A673 (cell line): ENCODE measurements at regions of chr19 and their contacts with region 1.

Region 1: DNA sequence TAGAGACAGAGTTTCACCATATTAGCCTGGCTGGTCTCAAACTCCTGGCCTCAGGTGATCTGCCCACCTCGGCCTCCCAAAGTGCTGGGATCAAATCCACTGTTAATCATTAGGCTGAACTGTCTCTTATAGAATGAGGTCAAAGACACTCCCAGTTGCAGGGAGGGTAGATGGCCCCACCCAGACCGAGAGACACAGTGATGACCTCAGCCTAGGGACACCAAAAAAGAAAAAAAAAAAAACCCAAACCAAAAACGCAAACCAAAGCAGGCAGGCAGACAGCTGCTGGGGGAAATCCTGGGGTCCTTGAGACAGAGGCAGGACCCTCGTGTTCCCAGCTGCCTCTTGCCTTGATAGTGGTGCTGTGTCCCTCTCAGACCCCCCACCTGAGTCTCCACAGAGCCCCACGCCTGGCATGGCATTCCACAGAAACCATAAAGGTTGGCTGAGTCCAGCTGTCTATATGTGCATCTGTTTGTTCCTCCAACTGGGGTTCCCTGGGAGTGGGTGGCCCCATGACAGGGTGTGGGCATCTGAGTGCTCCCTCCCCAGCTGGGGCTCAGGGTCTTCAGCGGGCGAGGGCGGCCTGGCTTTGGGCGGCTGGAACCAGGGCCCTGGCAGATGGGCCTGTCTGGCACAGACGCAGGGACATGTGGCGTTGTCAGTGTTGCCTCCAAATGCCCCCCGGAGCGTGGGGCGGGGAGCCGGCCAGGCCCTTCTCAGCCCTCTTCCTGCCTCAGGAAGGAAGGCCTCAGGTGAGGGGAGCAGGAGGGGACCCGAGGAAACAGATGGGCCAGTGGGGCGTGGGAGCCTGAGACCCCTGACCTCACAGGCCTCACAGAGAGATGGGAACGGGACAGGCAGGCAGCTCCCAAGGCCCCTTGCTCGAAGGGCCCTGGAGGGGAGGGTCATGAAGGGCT is 5.2 kb downstream of the DAND5 start:
- DNase-seq: no peak
- H3K4me3 ChIP-seq: no peak overlapping the region
- H3K27ac ChIP-seq: no peak overlapping the region
- H3K4me1 ChIP-seq: no peaks in the 10 kb centered on the region
- H3K27me3 ChIP-seq: no peaks in the 10 kb centered on the region
- CTCF ChIP-seq: no peak

Region 2: GRCh38 chr19:12913011-12913561 is 61.5 kb before region 1 on chr19:
- CTCF ChIA-PET with region 1: no interaction called
- POLR2A ChIA-PET with region 1: no interaction called
- intact Hi-C with region 1: no loop called
- DNase-seq: peak; percentile 90
- H3K4me3 ChIP-seq: peak overlapping the region; percentile 8
- H3K27ac ChIP-seq: peak overlapping the region; percentile 76
- H3K4me1 ChIP-seq: peaks cover 26% of the 10 kb centered on the region
- H3K27me3 ChIP-seq: no peaks in the 10 kb centered on the region
- CTCF ChIP-seq: no peak

Region 3: DNA sequence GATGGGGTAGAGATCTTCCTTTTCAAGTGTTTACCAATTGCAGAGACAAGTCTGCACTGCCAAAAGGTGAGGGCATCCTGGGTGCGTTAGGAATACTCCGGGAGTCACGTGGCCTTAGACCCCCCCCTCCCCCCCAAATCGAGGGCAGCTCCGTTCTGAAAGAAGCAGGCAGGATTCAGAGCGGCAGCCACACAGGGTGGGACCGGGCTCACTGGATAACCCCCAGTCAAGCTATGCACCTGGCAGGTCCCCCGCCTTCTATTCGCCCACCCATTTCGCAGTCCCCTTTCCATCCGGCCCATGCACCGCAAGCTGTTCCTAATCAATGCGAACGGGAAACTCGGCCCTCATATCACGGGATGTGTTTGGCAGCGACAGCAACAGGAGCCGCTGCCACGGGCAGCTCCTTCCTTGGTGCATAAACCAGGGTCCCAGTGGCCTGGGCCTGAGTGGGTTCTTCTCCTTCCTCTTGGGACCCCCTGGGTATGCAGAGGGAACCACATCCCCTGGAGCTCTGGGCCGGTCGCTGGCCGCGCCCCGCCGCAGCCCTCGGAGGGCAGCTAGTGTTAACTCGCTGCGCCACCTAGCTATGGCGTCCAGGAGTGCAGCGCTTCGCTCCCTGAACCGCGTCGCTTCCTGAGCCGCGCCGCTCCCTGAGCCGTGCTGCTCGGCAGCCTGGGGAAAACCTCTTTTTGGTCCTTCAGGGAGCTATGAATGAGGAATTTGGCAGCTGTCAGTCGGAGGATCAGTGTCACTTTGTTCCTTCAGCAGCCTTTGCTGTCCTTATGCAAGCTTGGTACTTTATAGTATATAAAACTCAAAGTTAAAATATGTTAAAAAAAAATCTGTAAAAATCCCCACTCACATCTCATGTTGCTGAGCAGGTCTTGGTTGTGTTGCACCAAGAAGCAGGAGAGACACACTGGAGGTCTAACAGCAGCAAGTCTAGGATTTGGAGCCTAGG is 86.7 kb after region 1 on chr19:
- CTCF ChIA-PET with region 1: interaction called, 20 read pairs
- POLR2A ChIA-PET with region 1: no interaction called
- intact Hi-C with region 1: no loop called
- DNase-seq: peak; percentile 85
- H3K4me3 ChIP-seq: peak overlapping the region; percentile 43
- H3K27ac ChIP-seq: no peak overlapping the region
- H3K4me1 ChIP-seq: peaks cover 45% of the 10 kb centered on the region
- H3K27me3 ChIP-seq: no peaks in the 10 kb centered on the region
- CTCF ChIP-seq: peak; percentile 98

Region 4: GRCh38 chr19:13093407-13094105 is 119.0 kb after region 1 on chr19:
- CTCF ChIA-PET with region 1: interaction called, 39 read pairs
- POLR2A ChIA-PET with region 1: no interaction called
- intact Hi-C with region 1: no loop called
- DNase-seq: peak; percentile 93
- H3K4me3 ChIP-seq: no peak overlapping the region
- H3K27ac ChIP-seq: peak overlapping the region; percentile 35
- H3K4me1 ChIP-seq: peaks cover 44% of the 10 kb centered on the region
- H3K27me3 ChIP-seq: no peaks in the 10 kb centered on the region
- CTCF ChIP-seq: peak; percentile 96

Region 5: DNA sequence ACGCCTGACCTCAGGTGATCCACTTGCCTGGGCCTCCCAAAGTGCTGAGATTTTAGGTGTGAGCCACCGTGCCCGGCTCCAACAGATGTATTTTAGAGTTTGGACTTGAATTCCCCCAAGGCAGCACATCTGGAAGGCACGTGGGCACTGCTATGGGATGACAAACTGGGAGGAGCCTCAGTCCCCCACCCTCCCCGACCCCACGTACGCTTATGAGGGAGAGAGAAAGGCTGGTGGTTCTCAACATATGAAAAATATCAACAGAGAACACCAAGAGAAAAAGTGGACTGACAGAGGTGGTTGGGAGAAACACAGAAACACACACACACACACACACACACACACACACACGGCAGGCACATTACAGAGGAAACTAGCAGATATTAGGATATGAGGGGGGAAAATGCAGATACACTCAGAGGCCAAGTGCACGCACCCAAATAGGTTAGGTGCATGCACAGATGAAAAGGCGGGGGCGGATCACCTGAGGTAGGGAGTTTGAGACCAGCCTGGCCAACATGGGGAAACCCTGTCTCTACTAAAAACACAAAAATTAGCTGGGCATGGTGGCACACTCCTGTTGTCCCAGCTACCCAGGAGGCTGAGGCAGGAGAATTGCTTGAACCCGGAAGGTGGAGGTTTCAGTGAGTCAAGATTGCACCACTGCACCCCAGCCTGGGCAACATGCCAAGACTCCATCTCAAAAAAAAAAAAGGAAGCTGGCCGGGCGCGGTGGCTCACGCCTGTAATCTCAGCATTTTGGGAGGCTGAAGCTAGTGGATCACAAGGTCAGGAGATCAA is 172.4 kb after region 1 on chr19:
- CTCF ChIA-PET with region 1: no interaction called
- POLR2A ChIA-PET with region 1: no interaction called
- intact Hi-C with region 1: no loop called
- DNase-seq: peak; percentile 36
- H3K4me3 ChIP-seq: no peak overlapping the region
- H3K27ac ChIP-seq: no peak overlapping the region
- H3K4me1 ChIP-seq: peaks cover 3% of the 10 kb centered on the region
- H3K27me3 ChIP-seq: no peaks in the 10 kb centered on the region
- CTCF ChIP-seq: no peak

Region 6: GRCh38 chr19:13262450-13262849 is 287.9 kb after region 1 on chr19:
- CTCF ChIA-PET with region 1: interaction called, 9 read pairs
- POLR2A ChIA-PET with region 1: no interaction called
- intact Hi-C with region 1: loop called (anchors 5 kb)
- DNase-seq: peak; percentile 71
- H3K4me3 ChIP-seq: no peak overlapping the region
- H3K27ac ChIP-seq: no peak overlapping the region
- H3K4me1 ChIP-seq: no peaks in the 10 kb centered on the region
- H3K27me3 ChIP-seq: no peaks in the 10 kb centered on the region
- CTCF ChIP-seq: peak; percentile 65

Region 7: GRCh38 chr19:13430790-13431582 is 456.4 kb after region 1 on chr19:
- CTCF ChIA-PET with region 1: interaction called, 7 read pairs
- POLR2A ChIA-PET with region 1: no interaction called
- intact Hi-C with region 1: loop called (anchors 10 kb)
- DNase-seq: peak; percentile 62
- H3K4me3 ChIP-seq: no peak overlapping the region
- H3K27ac ChIP-seq: no peak overlapping the region
- H3K4me1 ChIP-seq: no peaks in the 10 kb centered on the region
- H3K27me3 ChIP-seq: no peaks in the 10 kb centered on the region
- CTCF ChIP-seq: peak; percentile 72